ENCODE measurements at regions of chr15 and their contacts with region 1.

Region 1: GRCh38 chr15:29756358-29757267 is 65.7 kb downstream of the TJP1 start:
- DNase-seq: no peak
- H3K4me3 ChIP-seq: no peak overlapping the region
- H3K27ac ChIP-seq: no peak overlapping the region
- H3K4me1 ChIP-seq: peaks cover 20 to 33% (median 24%) of the 10 kb centered on the region in 4 donors
- H3K27me3 ChIP-seq: no peaks in the 10 kb centered on the region
- CTCF ChIP-seq: no peak
- EP300 ChIP-seq: no peak
- POLR2A ChIP-seq: no peak

Region 2: DNA sequence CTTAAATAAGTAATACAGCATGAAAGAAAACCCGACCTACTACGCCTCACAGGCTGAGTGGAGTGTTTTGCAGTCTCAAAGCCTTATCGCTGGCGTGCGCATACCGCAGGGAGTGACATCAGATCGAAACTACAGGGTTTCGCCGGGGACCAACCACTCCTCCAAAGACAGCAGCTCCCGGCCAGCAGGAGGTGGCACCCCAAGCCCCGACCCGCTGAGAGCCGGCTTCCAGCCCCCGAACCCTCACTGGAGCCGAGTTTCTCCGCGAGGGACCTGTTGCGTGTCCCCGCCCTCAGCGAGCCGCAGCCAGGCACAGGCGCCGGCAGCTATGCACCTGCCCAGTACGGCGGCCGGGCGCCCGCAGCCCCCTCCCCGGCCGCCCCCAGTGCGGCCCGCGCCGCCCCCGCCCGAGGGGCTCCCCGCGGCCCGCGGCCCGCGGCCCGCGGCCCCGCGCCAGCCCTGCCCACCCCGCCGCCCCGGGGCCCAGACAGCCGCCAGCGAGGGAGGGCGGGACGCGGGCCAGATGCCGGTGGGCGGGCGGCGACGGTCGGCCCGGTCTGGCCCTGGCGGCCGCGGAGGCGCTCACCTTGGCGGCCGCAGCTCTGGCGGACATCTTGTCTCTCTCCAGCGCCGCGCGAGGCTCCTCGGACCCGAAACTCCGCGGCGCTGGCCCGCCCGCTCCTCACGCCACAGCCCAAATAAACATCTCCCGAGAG is 65.0 kb after region 1 on chr15:
- intact Hi-C with region 1: loop called (anchors 5 kb)
- DNase-seq: no peak
- H3K4me3 ChIP-seq: peak overlapping the region; percentile 76 to 93 (median 89)
- H3K27ac ChIP-seq: peak overlapping the region; percentile 94 to 99 (median 98)
- H3K4me1 ChIP-seq: peaks cover 10 to 39% (median 30%) of the 10 kb centered on the region in 4 donors
- H3K27me3 ChIP-seq: no peaks in the 10 kb centered on the region
- CTCF ChIP-seq: peak in 1 of 3 experiments; percentile 28
- EP300 ChIP-seq: no peak
- POLR2A ChIP-seq: no peak